Posterior cingulate gyrus (tissue), 11 donors: ENCODE measurements at regions of chr11 and their contacts with region 1.

Region 1: GRCh38 chr11:65040847-65041621 is at the start of gene SAC3D1:
- DNase-seq: peak; percentile 81 to 98 (median 90)

Region 2: DNA sequence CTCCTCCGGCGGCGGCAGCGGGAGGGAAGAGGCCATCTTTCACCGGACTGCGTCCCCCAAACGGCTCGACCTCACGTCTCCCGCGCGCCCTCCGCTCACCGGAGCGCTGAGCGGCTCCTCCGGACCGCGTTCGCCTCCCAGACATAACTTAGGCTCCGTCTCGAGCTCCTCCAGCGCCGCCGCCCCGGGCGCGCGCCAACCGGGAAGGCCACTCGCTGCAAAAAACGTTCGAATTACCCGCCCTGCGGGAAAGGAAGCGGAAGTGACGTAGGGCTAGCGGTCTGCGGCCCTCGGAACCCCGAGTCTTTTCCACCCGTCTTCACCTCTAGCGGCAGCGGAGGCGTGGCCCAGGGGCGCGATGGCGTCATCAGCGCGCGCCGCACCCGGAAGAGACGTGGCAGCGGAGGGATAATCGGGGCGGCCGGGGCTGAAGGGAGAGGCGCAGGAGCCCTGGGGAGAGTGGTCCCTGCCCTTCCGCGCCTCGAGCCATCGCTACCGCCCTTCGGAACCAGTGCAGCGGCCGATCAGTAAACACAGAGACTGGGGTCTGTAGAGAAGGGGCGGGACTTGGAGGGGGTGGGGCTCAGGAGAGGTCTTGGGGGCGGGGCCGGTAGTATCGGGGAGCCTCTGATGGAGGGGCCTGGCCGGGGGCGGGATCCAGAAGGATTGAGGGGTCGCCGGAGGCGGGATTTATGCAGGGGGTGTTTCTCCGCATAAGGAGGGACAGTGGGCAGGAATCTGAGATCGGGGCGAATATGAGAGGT is 43.0 kb after region 1 on chr11 and contains the starts of genes CDCA5 and ZFPL1:
- intact Hi-C with region 1: loop called (anchors 1 kb)
- DNase-seq: peak; percentile 95 to 100 (median 98)

Region 3: DNA sequence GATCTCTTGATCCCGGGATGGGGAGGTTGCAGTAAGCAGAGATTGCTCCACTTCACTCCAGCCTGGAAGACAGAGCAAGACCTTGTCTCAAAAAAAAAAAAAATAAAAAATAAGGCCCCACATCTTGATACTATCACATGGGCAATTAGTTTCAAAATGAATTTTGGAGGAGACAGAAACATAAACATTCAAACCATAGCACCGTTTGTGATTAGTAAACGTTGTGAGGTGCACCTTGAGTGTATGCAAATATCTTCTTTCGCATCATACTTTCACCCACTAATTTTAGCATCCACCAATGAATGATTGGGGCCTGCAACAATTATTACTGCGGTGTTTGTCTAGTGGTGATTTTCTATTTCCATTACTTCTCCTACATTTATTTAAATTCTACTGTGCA is 118.0 kb after region 1 on chr11:
- intact Hi-C with region 1: no loop called
- DNase-seq: no peak